Stomach (tissue), 19 donors: ENCODE measurements at regions of chr6 and their contacts with region 1.

Region 1: GRCh38 chr6:32933636-32934085 is 7.2 kb downstream of the HLA-DMB start:
- DNase-seq: peak; percentile 86 to 88
- H3K4me3 ChIP-seq: no peak overlapping the region
- H3K27ac ChIP-seq: no peak overlapping the region
- H3K4me1 ChIP-seq: peaks cover 0 to 17% (median 0%) of the 10 kb centered on the region in 4 donors
- H3K27me3 ChIP-seq: no peaks in the 10 kb centered on the region
- CTCF ChIP-seq: peak in 5 of 7 experiments; percentile 58 to 89 (median 72)
- EP300 ChIP-seq: no peak
- POLR2A ChIP-seq: no peak

Region 2: GRCh38 chr6:32700391-32701040 is 233.1 kb before region 1 on chr6:
- intact Hi-C with region 1: no loop called
- DNase-seq: peak in 1 of 2 donors; percentile 85
- H3K4me3 ChIP-seq: no peak overlapping the region
- H3K27ac ChIP-seq: no peak overlapping the region
- H3K4me1 ChIP-seq: no peaks in the 10 kb centered on the region
- H3K27me3 ChIP-seq: peaks cover 0 to 55% (median 6%) of the 10 kb centered on the region in 3 donors
- CTCF ChIP-seq: peak in 5 of 7 experiments; percentile 20 to 64 (median 55)
- EP300 ChIP-seq: no peak
- POLR2A ChIP-seq: no peak

Region 3: GRCh38 chr6:32885698-32886286 is 47.9 kb before region 1 on chr6:
- intact Hi-C with region 1: loop called (anchors 10 kb)
- DNase-seq: peak in 1 of 2 donors; percentile 88
- H3K4me3 ChIP-seq: no peak overlapping the region
- H3K27ac ChIP-seq: no peak overlapping the region
- H3K4me1 ChIP-seq: peaks cover 0 to 12% (median 4%) of the 10 kb centered on the region in 4 donors
- H3K27me3 ChIP-seq: no peaks in the 10 kb centered on the region
- CTCF ChIP-seq: peak in 5 of 7 experiments; percentile 22 to 73 (median 61)
- EP300 ChIP-seq: no peak
- POLR2A ChIP-seq: no peak

Region 4: DNA sequence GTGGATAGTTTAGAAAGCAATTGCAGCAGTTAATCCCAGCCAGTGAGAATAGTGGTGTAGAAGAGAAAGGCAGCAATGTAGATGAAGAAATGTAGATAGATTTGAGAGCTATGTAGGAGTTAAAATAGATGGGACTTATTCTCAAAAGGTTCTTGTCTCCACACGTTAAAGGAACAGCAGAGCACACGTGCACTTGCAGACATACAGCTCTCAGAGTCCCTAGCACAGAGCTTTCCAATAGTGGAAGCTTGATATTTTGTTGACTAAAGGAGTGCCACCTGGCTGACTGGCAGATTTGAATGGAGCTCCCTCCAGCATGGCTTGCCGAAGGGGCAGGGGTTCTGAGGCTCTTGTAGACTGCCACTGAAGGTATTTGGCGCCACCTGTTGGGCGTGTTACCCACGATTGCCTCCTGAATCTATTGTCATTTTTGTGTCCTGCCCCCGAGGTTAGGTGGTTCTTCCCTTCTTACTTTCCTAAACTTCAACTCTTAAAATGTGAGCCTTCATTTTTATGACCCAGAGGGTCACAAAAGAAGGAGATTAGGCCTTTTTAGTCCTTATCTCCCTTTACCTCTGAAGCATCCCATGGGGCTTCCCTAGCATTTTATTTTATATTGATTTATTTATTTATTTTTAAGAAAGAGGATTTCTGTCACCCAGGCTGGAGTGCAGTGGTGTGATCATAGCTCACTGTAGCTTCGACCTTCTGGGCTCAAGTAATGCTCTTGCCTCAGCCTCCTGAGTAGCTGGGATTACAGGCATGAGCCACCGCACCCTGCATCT is 51.1 kb after region 1 on chr6:
- intact Hi-C with region 1: loop called (anchors 5 kb)
- DNase-seq: peak; percentile 96 to 98
- H3K4me3 ChIP-seq: no peak overlapping the region
- H3K27ac ChIP-seq: peak overlapping the region; percentile 47 to 76 (median 60)
- H3K4me1 ChIP-seq: peaks cover 33 to 54% (median 50%) of the 10 kb centered on the region in 4 donors
- H3K27me3 ChIP-seq: no peaks in the 10 kb centered on the region
- CTCF ChIP-seq: peak in 5 of 7 experiments; percentile 73 to 95 (median 86)
- EP300 ChIP-seq: no peak
- POLR2A ChIP-seq: no peak